MCF 10A (cell line): ENCODE measurements at regions of chr6 and their contacts with region 1.

Region 1: DNA sequence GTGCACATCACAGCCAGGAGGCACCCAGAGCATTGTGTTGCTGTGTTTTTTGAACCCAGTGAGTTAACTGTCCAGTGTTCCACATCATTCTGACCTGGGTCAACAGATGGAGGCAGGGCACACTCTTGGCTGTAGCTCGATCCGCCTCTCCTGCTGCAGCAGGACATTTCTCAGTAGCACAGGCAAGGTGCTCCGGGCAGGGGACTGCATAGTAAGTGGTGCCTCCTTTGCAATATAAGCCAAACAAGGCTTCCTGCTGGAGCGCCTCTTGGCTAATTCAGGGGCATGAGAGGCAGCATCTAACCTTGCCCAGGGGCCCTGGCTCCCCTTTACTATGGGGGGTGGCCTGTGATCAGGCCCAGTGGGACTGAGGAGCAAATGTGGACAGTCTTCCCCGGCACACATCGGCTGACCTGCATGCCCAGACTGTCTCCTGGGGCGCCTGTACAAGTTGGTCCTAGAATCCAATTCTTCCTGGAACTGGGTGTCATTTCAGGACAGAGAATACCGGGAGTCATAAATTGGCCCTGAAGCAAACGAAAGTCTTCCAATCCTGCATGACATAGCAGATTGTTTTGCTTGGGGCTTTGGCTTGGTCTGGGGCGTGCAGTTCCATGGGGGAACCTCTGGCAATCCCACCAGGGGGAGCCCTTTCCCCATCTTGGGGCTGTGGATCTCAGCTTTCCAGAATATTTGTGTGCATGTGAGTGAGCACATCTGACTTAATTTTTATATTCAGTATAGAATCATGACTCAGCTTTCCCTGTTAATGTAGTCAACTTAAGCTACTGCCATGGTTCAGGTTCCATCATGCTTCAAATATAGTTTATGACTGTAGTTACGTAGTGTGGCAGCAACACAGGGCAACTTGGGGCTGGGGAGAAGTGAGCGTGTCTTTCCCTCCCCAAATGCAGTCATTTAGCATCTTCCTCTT is 56.0 kb upstream of the DDR1 start:
- DNase-seq: peak; percentile 93
- H3K4me3 Mint-ChIP-seq: no peak overlapping the region
- H3K27ac Mint-ChIP-seq: no peak overlapping the region
- H3K4me1 Mint-ChIP-seq: peaks cover 25% of the 10 kb centered on the region
- H3K27me3 Mint-ChIP-seq: no peaks in the 10 kb centered on the region
- CTCF ChIP-seq: peak; percentile 92

Region 2: GRCh38 chr6:30730601-30731435 is 97.5 kb before region 1 on chr6:
- CTCF ChIA-PET with region 1: interaction called, 4 read pairs
- POLR2A ChIA-PET with region 1: interaction called, 15 read pairs
- intact Hi-C with region 1: no loop called
- DNase-seq: peak; percentile 91
- H3K4me3 Mint-ChIP-seq: no peak overlapping the region
- H3K27ac Mint-ChIP-seq: no peak overlapping the region
- H3K4me1 Mint-ChIP-seq: peaks cover 7% of the 10 kb centered on the region
- H3K27me3 Mint-ChIP-seq: no peaks in the 10 kb centered on the region
- CTCF ChIP-seq: peak; percentile 86

Region 3: GRCh38 chr6:30752157-30752927 is 76.0 kb before region 1 on chr6:
- CTCF ChIA-PET with region 1: interaction called, 7 read pairs
- POLR2A ChIA-PET with region 1: interaction called, 27 read pairs
- intact Hi-C with region 1: no loop called
- DNase-seq: peak; percentile 100
- H3K4me3 Mint-ChIP-seq: peak overlapping the region; percentile 54
- H3K27ac Mint-ChIP-seq: peak overlapping the region; percentile 94
- H3K4me1 Mint-ChIP-seq: peaks cover 49% of the 10 kb centered on the region
- H3K27me3 Mint-ChIP-seq: no peaks in the 10 kb centered on the region
- CTCF ChIP-seq: no peak

Region 4: DNA sequence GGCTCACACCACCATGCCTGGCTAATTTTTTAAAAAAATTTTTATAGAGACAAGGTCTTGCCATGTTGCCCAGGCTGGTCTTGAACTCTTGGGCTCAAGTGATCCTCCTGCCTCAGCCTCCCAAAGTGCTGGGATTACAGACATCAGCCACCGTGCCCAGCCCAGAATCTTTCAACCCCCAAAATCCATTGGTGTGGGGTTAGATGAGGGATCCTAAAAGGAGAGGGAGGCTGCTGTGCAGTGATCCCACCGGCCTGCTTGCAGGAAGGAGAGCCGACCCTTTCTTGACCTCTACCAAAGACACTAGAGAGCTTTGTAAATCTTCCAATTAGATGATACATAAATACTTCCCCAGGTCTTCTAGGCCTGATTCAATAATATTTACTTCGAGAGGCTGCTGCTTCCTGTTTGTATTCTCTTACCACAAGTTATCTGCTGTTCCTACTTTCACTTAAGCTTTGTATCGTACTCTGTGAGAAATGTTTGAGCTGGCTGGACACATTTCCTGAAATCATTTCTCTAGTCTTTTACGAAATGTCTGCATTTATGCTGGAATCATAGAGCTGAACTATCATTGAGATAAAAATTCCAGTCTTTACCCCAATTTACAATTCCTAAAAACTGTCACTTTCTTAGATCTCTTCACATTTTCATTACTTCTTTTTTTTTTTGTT is 34.6 kb before region 1 on chr6:
- CTCF ChIA-PET with region 1: no interaction called
- POLR2A ChIA-PET with region 1: no interaction called
- intact Hi-C with region 1: no loop called
- DNase-seq: no peak
- H3K4me3 Mint-ChIP-seq: no peak overlapping the region
- H3K27ac Mint-ChIP-seq: peak overlapping the region; percentile 54
- H3K4me1 Mint-ChIP-seq: no peaks in the 10 kb centered on the region
- H3K27me3 Mint-ChIP-seq: no peaks in the 10 kb centered on the region
- CTCF ChIP-seq: no peak

Region 5: GRCh38 chr6:30814136-30815040 is 13.9 kb before region 1 on chr6:
- CTCF ChIA-PET with region 1: interaction called, 38 read pairs
- POLR2A ChIA-PET with region 1: interaction called, 22 read pairs
- intact Hi-C with region 1: no loop called
- DNase-seq: peak; percentile 88
- H3K4me3 Mint-ChIP-seq: no peak overlapping the region
- H3K27ac Mint-ChIP-seq: peak overlapping the region; percentile 92
- H3K4me1 Mint-ChIP-seq: peaks cover 39% of the 10 kb centered on the region
- H3K27me3 Mint-ChIP-seq: no peaks in the 10 kb centered on the region
- CTCF ChIP-seq: no peak

Region 6: DNA sequence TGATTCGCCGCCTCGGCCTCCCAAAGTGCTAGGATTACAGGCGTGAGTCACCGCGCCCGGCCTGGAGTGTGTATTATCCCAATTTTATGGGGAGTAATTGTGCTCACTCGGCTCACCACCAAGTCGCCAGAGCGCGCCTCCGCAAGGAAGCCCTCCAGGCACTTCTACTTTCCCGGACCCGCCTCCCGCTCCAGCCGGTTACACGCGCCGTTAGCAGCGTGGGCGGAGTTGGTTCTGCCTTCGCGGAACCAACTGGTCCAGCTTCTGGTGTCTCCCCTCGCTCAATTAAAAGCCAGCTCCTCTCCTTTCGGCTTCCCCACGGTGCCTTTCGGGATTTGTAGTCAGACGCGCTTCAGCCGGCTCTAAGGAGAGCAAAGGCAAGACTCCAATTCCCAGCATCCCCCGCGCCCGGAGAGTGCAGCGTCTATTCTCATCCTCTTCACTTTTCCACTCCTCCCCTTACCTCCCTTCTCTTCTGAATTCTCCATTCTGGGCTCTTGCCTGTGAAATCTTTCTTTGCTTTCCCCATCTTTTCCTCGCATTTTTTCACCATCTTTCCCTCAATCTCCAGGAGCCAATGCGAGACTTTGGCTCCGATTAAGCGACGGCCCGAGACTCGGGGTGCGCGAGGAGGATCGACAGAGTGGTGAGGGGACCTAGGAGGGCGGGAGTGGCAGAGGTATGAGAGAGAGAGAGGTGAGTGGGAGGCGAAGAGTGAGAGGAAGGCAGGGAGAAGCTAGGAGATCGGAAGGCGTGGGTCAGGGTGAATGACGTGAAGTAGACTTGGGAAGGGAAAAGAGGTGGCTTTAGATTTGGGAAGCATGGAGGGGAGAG is 79.7 kb after region 1 on chr6 and contains the start of gene GTF2H4:
- CTCF ChIA-PET with region 1: interaction called, 25 read pairs
- POLR2A ChIA-PET with region 1: interaction called, 27 read pairs
- intact Hi-C with region 1: loop called (anchors 1 kb)
- DNase-seq: peak; percentile 100
- H3K4me3 Mint-ChIP-seq: peak within 1 kb of the TSS; percentile 96
- H3K27ac Mint-ChIP-seq: peak within 1 kb of the TSS; percentile 57
- H3K4me1 Mint-ChIP-seq: peaks cover 16% of the 10 kb centered on the region
- H3K27me3 Mint-ChIP-seq: no peaks in the 10 kb centered on the region
- CTCF ChIP-seq: no peak
- total RNA-seq, gene GTF2H4: 30.6 and 33.9 TPM in 2 replicates

Region 7: GRCh38 chr6:31079656-31080261 is 251.5 kb after region 1 on chr6:
- CTCF ChIA-PET with region 1: interaction called, 23 read pairs
- POLR2A ChIA-PET with region 1: interaction called, 3 read pairs
- intact Hi-C with region 1: no loop called
- DNase-seq: peak; percentile 69
- H3K4me3 Mint-ChIP-seq: no peak overlapping the region
- H3K27ac Mint-ChIP-seq: no peak overlapping the region
- H3K4me1 Mint-ChIP-seq: peaks cover 16% of the 10 kb centered on the region
- H3K27me3 Mint-ChIP-seq: no peaks in the 10 kb centered on the region
- CTCF ChIP-seq: peak; percentile 62